MCF 10A (cell line): ENCODE measurements at regions of chr1 and their contacts with region 1.

Region 1: GRCh38 chr1:180773210-180773865 is 139.4 kb upstream of the KIAA1614 start:
- DNase-seq: peak; percentile 53
- H3K4me3 Mint-ChIP-seq: no peak overlapping the region
- H3K27ac Mint-ChIP-seq: no peak overlapping the region
- H3K4me1 Mint-ChIP-seq: peaks cover 16% of the 10 kb centered on the region
- H3K27me3 Mint-ChIP-seq: no peaks in the 10 kb centered on the region
- CTCF ChIP-seq: no peak

Region 2: DNA sequence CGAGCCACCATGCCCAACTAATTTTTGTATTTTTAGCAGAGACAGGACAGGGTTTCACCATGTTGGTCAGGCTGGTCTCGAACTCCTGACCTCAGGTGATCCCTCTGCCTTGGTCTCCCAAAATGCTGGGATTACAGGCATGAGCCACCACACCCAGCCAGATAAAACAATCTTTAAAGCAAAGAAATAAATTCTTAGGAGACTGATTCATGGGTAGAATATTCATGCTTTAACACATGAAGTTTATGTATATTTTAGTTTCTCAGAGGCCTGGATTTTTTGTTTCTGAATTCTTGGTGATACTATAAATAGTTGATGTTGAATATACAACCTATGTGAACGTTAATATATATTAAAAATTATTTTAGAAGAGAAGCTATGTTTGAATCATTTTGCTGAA is 12.0 kb after region 1 on chr1:
- CTCF ChIA-PET with region 1: interaction called, 11 read pairs
- POLR2A ChIA-PET with region 1: interaction called, 13 read pairs
- intact Hi-C with region 1: no loop called
- DNase-seq: no peak
- H3K4me3 Mint-ChIP-seq: no peak overlapping the region
- H3K27ac Mint-ChIP-seq: no peak overlapping the region
- H3K4me1 Mint-ChIP-seq: peaks cover 30% of the 10 kb centered on the region
- H3K27me3 Mint-ChIP-seq: no peaks in the 10 kb centered on the region
- CTCF ChIP-seq: no peak